ENCODE measurements at regions of chr4 and their contacts with region 1.

Region 1: GRCh38 chr4:176123710-176124407 is 58.2 kb downstream of the WDR17 start:
- DNase-seq: no peak
- H3K4me3 Mint-ChIP-seq: no peak overlapping the region
- H3K27ac Mint-ChIP-seq: no peak overlapping the region
- H3K4me1 Mint-ChIP-seq: peaks cover 10% of the 10 kb centered on the region
- H3K27me3 Mint-ChIP-seq: peaks cover 4% of the 10 kb centered on the region

Region 2: DNA sequence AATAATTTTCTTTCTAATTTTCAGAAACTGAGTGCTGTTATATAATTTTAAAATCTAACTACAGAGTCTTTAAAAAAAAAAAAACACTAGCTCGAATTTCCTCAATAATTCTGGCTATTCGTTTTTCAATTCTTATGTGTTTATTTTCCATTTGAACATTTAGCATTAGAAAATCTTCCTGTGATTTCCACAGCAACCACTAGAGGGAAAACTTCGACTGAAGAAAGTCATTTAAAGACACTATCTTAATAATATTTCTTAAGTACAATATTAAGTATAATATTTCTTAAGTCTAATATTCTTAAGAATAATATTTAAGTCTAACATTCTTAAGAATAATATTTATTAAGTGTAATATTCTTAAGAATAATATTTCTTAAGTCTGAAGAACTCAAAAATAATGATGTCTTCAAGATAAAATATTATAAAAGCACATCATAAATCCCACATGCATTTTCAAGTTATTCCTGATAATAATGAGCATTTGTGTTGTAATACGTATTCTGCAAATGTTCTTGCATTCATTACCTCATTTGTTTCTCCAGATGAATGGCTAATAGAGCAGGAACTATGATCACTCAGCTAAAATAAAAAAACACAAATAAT is 176.6 kb before region 1 on chr4:
- CTCF ChIA-PET with region 1: no interaction called
- POLR2A ChIA-PET with region 1: no interaction called
- intact Hi-C with region 1: loop called (anchors 5 kb)
- DNase-seq: no peak
- H3K4me3 Mint-ChIP-seq: no peak overlapping the region
- H3K27ac Mint-ChIP-seq: no peak overlapping the region
- H3K4me1 Mint-ChIP-seq: peaks cover 6% of the 10 kb centered on the region
- H3K27me3 Mint-ChIP-seq: peaks cover 3% of the 10 kb centered on the region

Region 3: DNA sequence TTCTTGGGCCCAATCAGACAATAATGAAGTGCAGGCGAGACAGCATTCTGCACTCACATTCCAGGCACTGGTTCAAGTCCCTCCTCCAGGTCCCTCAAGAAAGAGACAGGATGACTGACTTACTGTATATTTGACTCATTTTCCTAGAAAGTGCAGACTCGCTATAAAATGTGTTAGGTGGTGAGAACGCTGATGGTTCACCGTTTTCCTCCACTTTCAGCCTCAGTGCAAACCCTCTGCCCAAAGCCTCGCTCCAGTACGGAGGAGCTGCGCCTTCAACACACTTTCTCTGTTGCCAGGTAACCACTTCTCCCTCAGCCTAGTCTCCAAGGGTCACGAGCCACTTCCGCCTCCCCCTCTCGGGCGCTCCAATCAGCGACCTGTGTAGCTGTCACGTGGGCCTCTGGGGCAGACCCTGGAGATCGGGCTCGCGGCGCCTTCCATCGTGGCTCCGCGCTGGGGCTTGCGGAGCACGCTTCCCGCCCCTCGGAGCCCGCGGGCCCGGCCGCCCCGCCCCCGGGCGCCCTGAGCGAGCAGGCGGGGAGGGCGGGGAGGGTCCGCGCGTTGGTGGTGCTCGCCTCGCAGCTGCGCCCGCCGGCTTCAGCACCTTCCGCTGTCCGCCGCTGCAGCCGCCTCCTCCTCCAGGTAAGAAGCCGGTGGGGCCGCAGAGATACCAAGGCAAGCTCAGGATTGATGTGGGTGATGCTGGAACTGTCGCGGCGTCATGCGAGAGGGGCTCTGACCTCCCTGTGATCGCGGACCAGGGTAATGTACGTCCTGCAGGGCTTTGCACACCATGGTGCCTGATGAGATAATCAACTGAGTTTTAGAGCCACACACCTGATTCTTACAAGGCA is 58.2 kb before region 1 on chr4 and contains the start of gene WDR17:
- CTCF ChIA-PET with region 1: no interaction called
- POLR2A ChIA-PET with region 1: no interaction called
- intact Hi-C with region 1: loop called (anchors 5 kb)
- DNase-seq: peak; percentile 83
- H3K4me3 Mint-ChIP-seq: peak within 1 kb of the TSS; percentile 75
- H3K27ac Mint-ChIP-seq: no peak within 1 kb of the TSS
- H3K4me1 Mint-ChIP-seq: peaks cover 12% of the 10 kb centered on the region
- H3K27me3 Mint-ChIP-seq: peaks cover 17% of the 10 kb centered on the region
- total RNA-seq, gene WDR17: 1.1 to 1.2 TPM

Measured in activated CD4-positive, alpha-beta memory T cell treated with anti-CD3 and anti-CD28 coated beads for 36 hours (primary cell).